Heart right ventricle (tissue), 16 donors: ENCODE measurements at regions of chr9 and their contacts with region 1.

Region 1: DNA sequence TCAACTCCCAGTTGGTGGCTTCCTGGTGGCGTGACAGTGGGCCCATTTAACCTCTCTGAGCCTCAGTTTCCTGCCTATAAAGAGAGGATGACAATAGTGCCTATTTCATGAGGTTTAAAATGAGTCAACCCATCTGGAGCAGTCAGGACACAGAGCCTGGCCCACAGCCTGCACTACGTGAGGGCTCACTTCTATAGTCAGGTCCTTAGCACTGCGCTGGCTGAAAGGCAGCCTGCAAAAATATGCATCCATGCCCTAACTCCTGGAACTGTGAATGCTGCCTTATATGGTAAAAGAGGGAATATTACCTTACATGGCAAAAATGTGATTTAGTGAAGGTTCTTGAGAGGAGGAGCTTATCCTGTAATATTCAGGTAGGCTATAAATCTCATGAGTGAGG is 98.6 kb downstream of the GABBR2 start:
- DNase-seq: no peak
- ATAC-seq: no peak
- H3K4me3 ChIP-seq: no peak overlapping the region
- H3K27ac ChIP-seq: no peak overlapping the region
- H3K4me1 ChIP-seq: no peaks in the 10 kb centered on the region
- H3K27me3 ChIP-seq: peaks cover 0 to 12% (median 0%) of the 10 kb centered on the region in 7 donors
- CTCF ChIP-seq: no peak

Region 2: GRCh38 chr9:98222885-98223640 is 387.1 kb before region 1 on chr9:
- intact Hi-C with region 1: loop called in 1 of 10 experiments (anchors 5 kb)
- DNase-seq: no peak
- ATAC-seq: peak in 3 of 8 donors; percentile 20 to 55 (median 48)
- H3K4me3 ChIP-seq: no peak overlapping the region
- H3K27ac ChIP-seq: peak overlapping the region in 1 of 10 donors; percentile 20
- H3K4me1 ChIP-seq: peaks cover 0 to 15% (median 0%) of the 10 kb centered on the region in 9 donors
- H3K27me3 ChIP-seq: no peaks in the 10 kb centered on the region
- CTCF ChIP-seq: no peak

Region 3: DNA sequence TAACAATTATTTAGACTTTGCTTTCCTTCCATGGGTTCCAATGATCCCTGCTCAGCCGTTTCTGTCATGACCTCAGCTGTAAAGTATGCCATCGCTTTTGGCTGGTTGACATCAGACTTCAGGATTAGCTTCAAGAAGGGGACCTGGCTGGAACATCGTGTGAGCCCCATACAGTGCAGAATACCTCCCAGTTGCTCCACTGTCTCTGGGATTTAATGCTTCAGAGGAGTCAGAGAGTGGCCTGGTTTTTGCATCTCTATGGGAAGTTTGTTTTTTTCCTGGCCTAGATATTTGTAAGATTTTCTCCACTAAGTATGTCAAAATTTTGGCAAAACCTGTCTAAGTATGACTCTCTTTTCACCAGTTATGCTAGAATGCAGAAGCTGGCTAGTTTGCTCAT is 118.3 kb before region 1 on chr9:
- intact Hi-C with region 1: no loop called
- DNase-seq: peak in 1 of 2 donors; percentile 41
- ATAC-seq: peak; percentile 71 to 98 (median 87)
- H3K4me3 ChIP-seq: no peak overlapping the region
- H3K27ac ChIP-seq: peak overlapping the region in 4 of 10 donors; percentile 10 to 45 (median 42)
- H3K4me1 ChIP-seq: peaks cover 0 to 10% (median 0%) of the 10 kb centered on the region in 9 donors
- H3K27me3 ChIP-seq: no peaks in the 10 kb centered on the region
- CTCF ChIP-seq: no peak

Region 4: GRCh38 chr9:98678242-98678842 is 68.2 kb after region 1 on chr9:
- intact Hi-C with region 1: loop called in 1 of 10 experiments (anchors 10 kb)
- DNase-seq: no peak
- ATAC-seq: no peak
- H3K4me3 ChIP-seq: no peak overlapping the region
- H3K27ac ChIP-seq: no peak overlapping the region
- H3K4me1 ChIP-seq: no peaks in the 10 kb centered on the region
- H3K27me3 ChIP-seq: peaks cover 0 to 17% (median 0%) of the 10 kb centered on the region in 7 donors
- CTCF ChIP-seq: peak in 7 of 9 donors; percentile 6 to 46 (median 34)

Region 5: GRCh38 chr9:99076483-99077171 is 466.5 kb after region 1 on chr9:
- intact Hi-C with region 1: no loop called
- DNase-seq: no peak
- ATAC-seq: peak in 5 of 8 donors; percentile 14 to 43 (median 35)
- H3K4me3 ChIP-seq: no peak overlapping the region
- H3K27ac ChIP-seq: peak overlapping the region in 6 of 10 donors; percentile 14 to 79 (median 38)
- H3K4me1 ChIP-seq: peaks cover 0 to 45% (median 29%) of the 10 kb centered on the region in 9 donors
- H3K27me3 ChIP-seq: no peaks in the 10 kb centered on the region
- CTCF ChIP-seq: no peak